ENCODE measurements at regions of chr3 and their contacts with region 1.

Region 1: GRCh38 chr3:115783938-115784738 is 160.8 kb downstream of the GAP43 start:
- DNase-seq: peak; percentile 94
- ATAC-seq: peak; percentile 92
- H3K4me3 Mint-ChIP-seq: peak overlapping the region; percentile 86
- H3K27ac Mint-ChIP-seq: peak overlapping the region; percentile 98
- H3K4me1 Mint-ChIP-seq: peaks cover 12% of the 10 kb centered on the region
- H3K27me3 Mint-ChIP-seq: peaks cover 2% of the 10 kb centered on the region

Region 2: GRCh38 chr3:115092220-115092791 is 691.8 kb before region 1 on chr3:
- CTCF ChIA-PET with region 1: interaction called, 12 read pairs
- POLR2A ChIA-PET with region 1: no interaction called
- DNase-seq: peak; percentile 70
- ATAC-seq: peak; percentile 51
- H3K4me3 Mint-ChIP-seq: no peak overlapping the region
- H3K27ac Mint-ChIP-seq: no peak overlapping the region
- H3K4me1 Mint-ChIP-seq: no peaks in the 10 kb centered on the region
- H3K27me3 Mint-ChIP-seq: no peaks in the 10 kb centered on the region

Region 3: GRCh38 chr3:115217678-115218451 is 566.3 kb before region 1 on chr3:
- CTCF ChIA-PET with region 1: interaction called, 19 read pairs
- POLR2A ChIA-PET with region 1: no interaction called
- DNase-seq: peak; percentile 37
- ATAC-seq: no peak
- H3K4me3 Mint-ChIP-seq: no peak overlapping the region
- H3K27ac Mint-ChIP-seq: no peak overlapping the region
- H3K4me1 Mint-ChIP-seq: no peaks in the 10 kb centered on the region
- H3K27me3 Mint-ChIP-seq: peaks cover 6% of the 10 kb centered on the region

Region 4: GRCh38 chr3:115814778-115815380 is 30.7 kb after region 1 on chr3:
- CTCF ChIA-PET with region 1: interaction called, 22 read pairs
- POLR2A ChIA-PET with region 1: interaction called, 4 read pairs
- DNase-seq: peak; percentile 75
- ATAC-seq: peak; percentile 71
- H3K4me3 Mint-ChIP-seq: no peak overlapping the region
- H3K27ac Mint-ChIP-seq: no peak overlapping the region
- H3K4me1 Mint-ChIP-seq: no peaks in the 10 kb centered on the region
- H3K27me3 Mint-ChIP-seq: peaks cover 16% of the 10 kb centered on the region

Region 5: GRCh38 chr3:115819785-115820384 is 35.7 kb after region 1 on chr3:
- CTCF ChIA-PET with region 1: interaction called, 22 read pairs
- POLR2A ChIA-PET with region 1: no interaction called
- DNase-seq: peak; percentile 80
- ATAC-seq: peak; percentile 93
- H3K4me3 Mint-ChIP-seq: no peak overlapping the region
- H3K27ac Mint-ChIP-seq: no peak overlapping the region
- H3K4me1 Mint-ChIP-seq: no peaks in the 10 kb centered on the region
- H3K27me3 Mint-ChIP-seq: peaks cover 3% of the 10 kb centered on the region

Measured in activated CD8-positive, alpha-beta T cell treated with anti-CD3 and anti-CD28 coated beads, Interleukin-2, amount 10 ng/mL, durations not matched to agents 7 days and 5 days (primary cell).